ENCODE measurements at regions of chr21 and their contacts with region 1.

Region 1: GRCh38 chr21:32653311-32653901 is 41.2 kb upstream of the CFAP298 start:
- DNase-seq: peak; percentile 49
- H3K4me3 Mint-ChIP-seq: no peak overlapping the region
- H3K27ac Mint-ChIP-seq: no peak overlapping the region
- H3K4me1 Mint-ChIP-seq: no peaks in the 10 kb centered on the region
- H3K27me3 Mint-ChIP-seq: no peaks in the 10 kb centered on the region
- CTCF ChIP-seq: peak; percentile 51

Region 2: GRCh38 chr21:32030146-32030652 is 623.2 kb before region 1 on chr21:
- CTCF ChIA-PET with region 1: no interaction called
- intact Hi-C with region 1: no loop called
- DNase-seq: no peak
- H3K4me3 Mint-ChIP-seq: no peak overlapping the region
- H3K27ac Mint-ChIP-seq: no peak overlapping the region
- H3K4me1 Mint-ChIP-seq: no peaks in the 10 kb centered on the region
- H3K27me3 Mint-ChIP-seq: peaks cover 17% of the 10 kb centered on the region
- CTCF ChIP-seq: no peak

Region 3: GRCh38 chr21:32569261-32570230 is 83.9 kb before region 1 on chr21:
- CTCF ChIA-PET with region 1: no interaction called
- intact Hi-C with region 1: no loop called
- DNase-seq: peak; percentile 70
- H3K4me3 Mint-ChIP-seq: peak overlapping the region; percentile 78
- H3K27ac Mint-ChIP-seq: peak overlapping the region; percentile 61
- H3K4me1 Mint-ChIP-seq: no peaks in the 10 kb centered on the region
- H3K27me3 Mint-ChIP-seq: no peaks in the 10 kb centered on the region
- CTCF ChIP-seq: peak; percentile 59

Region 4: GRCh38 chr21:32727687-32728455 is 74.5 kb after region 1 on chr21 and contains the start of gene SYNJ1:
- CTCF ChIA-PET with region 1: interaction called, 3 read pairs
- intact Hi-C with region 1: loop called (anchors 5 kb)
- DNase-seq: peak; percentile 91
- H3K4me3 Mint-ChIP-seq: peak within 1 kb of the TSS; percentile 92
- H3K27ac Mint-ChIP-seq: peak within 1 kb of the TSS; percentile 58
- H3K4me1 Mint-ChIP-seq: no peaks in the 10 kb centered on the region
- H3K27me3 Mint-ChIP-seq: no peaks in the 10 kb centered on the region
- CTCF ChIP-seq: no peak
- total RNA-seq, gene SYNJ1: 10.2 and 10.5 TPM in 2 replicates

Region 5: DNA sequence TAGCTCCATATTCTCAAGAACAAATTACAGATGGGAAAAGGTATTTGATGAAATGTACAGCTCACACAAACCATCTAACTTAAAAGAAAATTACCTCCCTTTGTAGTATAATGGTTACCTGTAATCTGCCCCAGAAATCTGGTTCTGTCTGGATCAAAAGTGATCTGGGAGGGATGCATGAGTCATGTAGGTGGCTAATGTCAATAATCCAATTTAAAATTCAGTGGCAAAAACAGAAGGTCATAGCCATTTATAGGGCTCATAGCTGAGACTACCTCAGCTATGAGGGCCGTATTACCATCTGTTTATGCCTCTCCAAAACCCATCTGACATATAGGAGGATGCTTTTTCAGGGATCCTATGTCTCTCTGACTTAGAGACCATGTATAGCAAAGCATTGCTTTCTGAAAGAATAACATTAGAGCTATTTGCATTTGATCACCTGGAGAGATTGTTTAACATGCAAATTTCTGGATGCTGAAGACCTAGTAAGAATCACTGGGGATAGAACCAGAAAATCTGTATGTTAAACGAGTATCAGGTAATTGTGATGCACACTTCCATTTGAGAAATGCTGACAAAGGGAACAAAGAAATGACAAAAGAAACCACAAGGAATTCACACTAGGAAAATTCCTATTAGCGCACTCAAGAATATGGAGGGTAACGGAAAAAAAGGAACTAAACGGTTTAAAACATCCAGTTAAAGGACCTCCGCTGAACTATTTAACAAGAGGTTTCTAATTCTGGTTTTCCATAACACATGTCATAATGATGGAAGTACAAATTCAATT is 100.6 kb after region 1 on chr21:
- CTCF ChIA-PET with region 1: no interaction called
- intact Hi-C with region 1: loop called (anchors 10 kb)
- DNase-seq: no peak
- H3K4me3 Mint-ChIP-seq: no peak overlapping the region
- H3K27ac Mint-ChIP-seq: no peak overlapping the region
- H3K4me1 Mint-ChIP-seq: no peaks in the 10 kb centered on the region
- H3K27me3 Mint-ChIP-seq: no peaks in the 10 kb centered on the region
- CTCF ChIP-seq: no peak

Region 6: DNA sequence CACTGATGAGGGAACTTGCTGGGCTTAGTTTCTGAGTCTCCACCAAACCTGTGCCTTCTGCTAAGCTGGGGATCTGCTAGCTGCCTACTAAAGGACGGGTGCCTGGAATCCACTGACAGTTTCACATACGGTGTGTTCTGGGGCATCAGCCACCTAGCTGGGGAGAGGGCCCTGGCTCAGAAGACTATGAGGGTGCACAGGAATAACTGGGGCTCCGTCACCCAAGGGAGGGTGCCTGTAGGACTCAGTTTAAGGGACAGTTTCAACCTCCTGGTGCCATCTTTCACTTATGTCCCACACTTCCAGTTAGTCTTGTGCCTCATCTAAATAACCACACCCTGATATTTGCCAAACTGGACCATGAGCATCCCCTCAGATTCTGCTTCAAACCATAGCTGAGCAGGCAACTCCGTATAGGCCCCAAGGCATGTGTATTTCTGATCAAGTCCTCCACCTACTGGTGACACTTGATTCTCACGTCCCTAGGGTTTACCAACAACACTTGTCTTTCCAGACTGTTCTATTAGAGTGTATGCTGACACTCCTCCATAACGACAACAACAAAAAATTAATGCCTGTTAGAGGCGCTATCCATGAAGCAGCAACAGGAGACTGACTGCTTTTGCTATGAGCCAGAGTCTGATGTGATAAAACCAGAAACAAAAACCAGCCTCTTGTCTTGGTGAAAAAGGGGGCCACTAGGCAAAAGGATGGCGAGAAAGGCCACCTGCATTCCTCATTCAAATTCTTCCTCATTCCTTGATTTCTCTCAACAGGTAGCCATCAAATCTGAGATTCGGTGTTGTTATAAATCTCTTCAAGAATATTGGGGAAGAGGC is 173.1 kb after region 1 on chr21:
- CTCF ChIA-PET with region 1: interaction called, 10 read pairs
- intact Hi-C with region 1: loop called (anchors 1 kb)
- DNase-seq: peak; percentile 48
- H3K4me3 Mint-ChIP-seq: no peak overlapping the region
- H3K27ac Mint-ChIP-seq: no peak overlapping the region
- H3K4me1 Mint-ChIP-seq: no peaks in the 10 kb centered on the region
- H3K27me3 Mint-ChIP-seq: no peaks in the 10 kb centered on the region
- CTCF ChIP-seq: peak; percentile 29

Measured in Calu3 (cell line).